CD14-positive monocyte (primary cell): ENCODE measurements at regions of chr19 and their contacts with region 1.

Region 1: DNA sequence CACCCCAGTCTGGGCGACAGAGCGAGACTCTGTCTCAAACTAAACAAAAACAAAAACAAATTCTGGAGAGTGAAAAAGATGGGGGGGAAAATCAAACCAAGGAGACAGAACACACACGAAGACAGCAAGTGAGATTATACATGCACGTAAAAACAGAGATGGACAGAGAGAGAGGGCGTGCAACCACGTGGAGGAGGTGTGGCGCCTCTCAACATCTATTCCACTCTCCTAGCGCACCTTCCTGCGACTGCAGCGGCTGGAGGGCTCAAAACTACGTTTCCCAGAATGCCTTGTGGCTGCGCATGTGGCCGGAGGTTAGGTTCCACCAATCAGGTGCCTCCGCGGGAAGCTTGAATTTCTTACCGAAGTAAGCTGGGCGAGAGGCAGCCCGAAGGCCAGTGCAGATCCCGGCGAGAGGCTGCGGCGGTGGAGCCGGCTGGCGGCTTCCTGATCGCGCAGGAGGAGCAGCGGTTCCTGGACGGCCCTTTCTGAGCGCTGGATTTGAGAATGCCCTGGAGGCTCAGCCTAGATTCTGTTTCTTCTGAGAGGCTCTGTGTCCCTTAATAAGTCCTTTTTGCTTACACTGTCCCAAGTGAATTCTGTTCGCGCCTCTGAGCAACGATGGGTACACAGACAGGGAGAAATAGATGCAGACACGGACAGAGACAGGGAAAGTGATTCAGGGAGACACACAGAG is 13.1 kb upstream of the NANOS2 start:
- DNase-seq: peak; percentile 78 to 86 (median 85)
- H3K4me3 ChIP-seq: peak overlapping the region in 1 of 3 experiments; percentile 45
- H3K4me3 Mint-ChIP-seq: peak overlapping the region in 1 of 2 donors; percentile 66
- H3K27ac ChIP-seq: no peak overlapping the region
- H3K27ac Mint-ChIP-seq: peak overlapping the region in 1 of 7 donors; percentile 16
- H3K4me1 ChIP-seq: peaks cover 7 to 9% of the 10 kb centered on the region in 2 donors
- H3K4me1 Mint-ChIP-seq: peaks cover 8% of the 10 kb centered on the region
- H3K27me3 ChIP-seq: peaks cover 0 to 4% of the 10 kb centered on the region in 2 donors
- H3K27me3 Mint-ChIP-seq: peaks cover 11 to 34% (median 28%) of the 10 kb centered on the region in 3 donors
- CTCF ChIP-seq: no peak

Region 2: DNA sequence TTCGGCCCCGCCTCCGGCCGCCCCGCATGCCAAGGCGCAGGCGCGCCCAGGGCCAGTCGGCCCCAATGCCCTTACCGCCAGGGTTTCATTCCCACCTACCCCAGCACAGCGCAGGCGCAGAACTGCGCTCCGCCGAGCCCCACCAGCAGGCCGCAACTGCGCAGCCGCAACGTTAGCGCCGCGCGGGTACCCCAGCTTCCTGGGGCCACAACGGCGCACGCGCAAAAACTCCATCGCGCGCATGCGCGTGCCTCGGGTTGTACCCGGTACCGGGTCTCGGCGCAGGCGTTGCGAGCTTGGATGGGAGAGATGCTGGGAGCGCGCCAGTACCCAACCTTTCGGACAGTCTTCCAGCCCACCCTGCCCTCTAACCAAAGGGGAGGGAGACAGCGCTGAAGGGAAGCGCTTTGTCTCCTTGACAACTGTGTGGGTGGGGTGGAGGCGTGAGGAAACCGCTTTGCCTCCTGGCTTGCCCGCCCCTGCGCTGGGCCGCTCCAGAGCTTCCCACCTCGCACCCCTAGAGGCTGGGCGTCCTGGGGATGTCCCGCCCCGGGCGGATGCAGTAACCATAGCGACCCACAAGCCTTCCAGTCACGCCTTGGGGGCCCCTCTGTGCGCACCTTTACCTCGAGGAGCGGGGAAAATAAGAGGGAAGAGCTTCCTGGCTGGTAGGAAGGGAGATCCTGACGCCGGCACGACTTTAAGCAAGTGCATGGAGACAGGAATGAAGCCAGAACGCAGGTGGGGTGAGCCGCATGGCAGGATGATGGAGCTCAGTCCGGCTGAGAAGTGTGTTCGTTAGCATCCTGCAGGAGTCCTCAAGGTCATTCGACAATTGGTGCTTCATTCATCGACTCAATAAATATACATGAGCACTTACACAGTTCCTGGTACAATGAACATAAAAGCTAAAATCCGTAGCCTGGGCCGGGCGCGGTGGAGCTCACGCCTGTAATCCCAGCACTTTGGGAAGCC is 24.8 kb before region 1 on chr19:
- intact Hi-C with region 1: loop called in 1 of 2 experiments (anchors 2 kb)
- DNase-seq: peak; percentile 97 to 98 (median 98)
- H3K4me3 ChIP-seq: peak overlapping the region; percentile 67 to 94 (median 93)
- H3K4me3 Mint-ChIP-seq: peak overlapping the region; percentile 80 to 95
- H3K27ac ChIP-seq: peak overlapping the region; percentile 75 to 79
- H3K27ac Mint-ChIP-seq: peak overlapping the region; percentile 37 to 92 (median 83)
- H3K4me1 ChIP-seq: peaks cover 19 to 31% of the 10 kb centered on the region in 2 donors
- H3K4me1 Mint-ChIP-seq: peaks cover 21% of the 10 kb centered on the region
- H3K27me3 ChIP-seq: no peaks in the 10 kb centered on the region
- H3K27me3 Mint-ChIP-seq: peaks cover 7 to 23% (median 23%) of the 10 kb centered on the region in 3 donors
- CTCF ChIP-seq: no peak